Cardiac septum (tissue), 1 donor: ENCODE measurements at regions of chr20 and their contacts with region 1.

Region 1: DNA sequence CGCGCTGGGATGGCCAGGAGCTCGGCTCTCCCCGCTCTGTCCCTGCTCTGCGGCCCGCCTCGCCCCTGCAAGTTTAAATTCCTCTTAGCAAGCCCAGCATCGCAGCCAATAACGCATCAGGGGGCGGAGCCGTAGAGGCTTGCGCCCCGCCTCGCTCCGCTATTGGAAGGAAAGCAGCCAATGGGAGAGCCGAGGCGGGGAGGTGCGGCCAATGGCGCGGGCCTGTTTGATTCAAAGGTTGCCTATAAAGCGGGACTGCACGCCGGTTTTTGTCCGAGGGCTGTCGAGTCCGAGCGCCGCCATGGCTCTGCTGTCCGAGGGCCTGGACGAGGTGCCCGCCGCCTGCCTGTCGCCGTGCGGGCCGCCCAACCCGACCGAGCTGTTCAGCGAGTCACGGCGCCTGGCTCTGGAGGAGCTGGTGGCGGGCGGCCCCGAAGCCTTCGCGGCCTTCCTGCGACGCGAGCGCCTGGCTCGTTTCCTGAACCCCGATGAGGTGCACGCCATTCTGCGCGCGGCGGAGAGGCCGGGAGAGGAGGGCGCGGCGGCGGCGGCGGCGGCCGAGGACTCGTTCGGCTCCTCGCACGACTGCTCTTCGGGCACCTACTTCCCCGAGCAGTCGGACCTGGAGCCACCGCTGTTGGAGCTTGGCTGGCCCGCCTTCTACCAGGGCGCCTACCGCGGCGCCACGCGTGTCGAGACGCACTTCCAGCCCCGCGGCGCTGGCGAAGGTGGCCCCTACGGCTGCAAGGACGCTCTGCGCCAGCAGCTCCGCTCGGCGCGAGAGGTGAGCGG is at the start of gene FAM83D:
- DNase-seq: peak; percentile 96
- total RNA-seq, gene FAM83D: 0.62 TPM

Region 2: DNA sequence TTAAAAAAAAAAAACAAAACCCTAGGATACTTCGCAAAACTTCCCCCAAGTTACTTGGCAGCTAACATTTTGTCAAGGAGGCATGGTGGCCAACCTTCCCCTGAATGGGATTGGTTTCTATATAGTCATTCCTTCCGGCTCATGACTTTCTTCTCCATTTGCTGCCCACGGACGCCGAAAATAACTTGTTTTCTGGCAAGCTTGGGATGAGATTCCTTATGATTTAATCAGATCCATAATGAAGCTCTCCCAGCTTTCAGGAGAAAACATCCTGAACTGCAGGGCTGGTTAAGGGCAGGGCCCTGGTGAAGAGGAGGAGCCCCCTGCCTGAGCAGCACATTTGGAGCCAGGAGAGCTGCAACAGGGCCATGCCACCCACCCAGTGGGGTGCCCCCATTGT is 71.0 kb before region 1 on chr20:
- intact Hi-C with region 1: no loop called
- DNase-seq: no peak

Region 3: DNA sequence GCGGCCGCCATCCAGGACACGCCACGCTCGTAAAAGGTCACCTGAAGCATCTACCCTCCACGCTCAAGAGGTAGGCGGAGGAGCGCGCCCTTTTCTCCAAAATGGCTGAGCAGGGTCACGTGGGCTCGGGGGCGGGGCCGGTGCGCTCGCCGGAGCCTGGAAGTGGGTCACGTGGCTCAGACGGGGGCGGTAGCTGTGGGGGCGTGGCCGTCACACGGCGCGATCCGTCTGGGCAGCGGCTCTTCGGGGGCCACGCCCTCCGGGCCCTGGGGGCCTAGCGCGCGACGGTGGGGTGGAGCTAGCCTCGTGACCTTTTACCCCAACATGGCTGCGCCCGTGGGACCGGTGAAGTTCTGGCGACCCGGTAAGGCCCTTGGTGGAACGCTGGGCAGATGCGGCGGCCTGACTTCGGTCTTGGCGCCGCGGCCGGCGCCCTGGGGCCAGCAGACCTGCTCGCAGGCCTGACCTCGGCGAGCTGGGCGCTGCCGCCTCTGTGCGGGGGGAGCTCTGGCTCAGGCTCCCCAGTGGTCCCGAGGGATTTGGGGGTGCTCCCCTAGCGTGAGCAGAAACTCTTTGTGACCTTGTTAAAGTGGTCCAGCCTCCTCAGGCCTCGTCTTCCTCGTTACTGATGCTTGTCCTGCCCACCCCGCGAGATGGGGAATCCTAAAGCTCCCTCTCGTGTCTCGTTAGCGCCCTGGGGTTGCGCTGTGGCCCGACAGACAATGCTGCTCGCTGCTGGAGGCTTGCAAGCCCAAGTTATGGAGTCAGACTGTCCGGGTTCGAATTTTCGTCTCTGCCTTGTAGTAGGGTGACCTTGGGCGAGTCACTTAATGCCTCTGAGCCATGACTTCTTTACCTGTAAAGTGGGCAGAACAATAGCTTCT is 35.9 kb after region 1 on chr20 and contains the start of gene DHX35:
- intact Hi-C with region 1: loop called (anchors 5 kb)
- DNase-seq: peak; percentile 99
- total RNA-seq, gene DHX35: 11.4 TPM

Region 4: GRCh38 chr20:39745380-39745779 is 819.0 kb after region 1 on chr20:
- intact Hi-C with region 1: no loop called
- DNase-seq: no peak